MCF 10A (cell line): ENCODE measurements at regions of chr1 and their contacts with region 1.

Region 1: DNA sequence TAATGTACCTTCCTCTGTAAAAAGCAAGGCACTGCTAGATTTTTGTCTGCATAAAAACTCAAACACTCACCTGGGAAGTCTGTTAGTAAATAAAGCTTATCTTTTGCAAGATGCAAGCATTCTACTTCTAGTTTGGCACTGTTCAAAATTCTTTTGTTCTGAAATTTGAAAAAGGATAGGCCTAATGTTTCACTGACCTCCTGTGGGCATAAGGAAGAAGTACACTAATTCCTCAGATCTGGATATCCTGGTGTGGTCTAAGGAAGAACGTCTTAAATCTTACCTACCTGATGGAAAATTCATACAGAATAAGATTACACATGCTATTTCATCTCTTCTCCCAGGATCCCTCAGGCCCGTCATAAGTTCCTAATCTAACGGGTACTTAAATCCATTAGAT is 93.5 kb upstream of the CAMK1G start:
- DNase-seq: peak; percentile 69
- H3K4me3 Mint-ChIP-seq: no peak overlapping the region
- H3K27ac Mint-ChIP-seq: no peak overlapping the region
- H3K4me1 Mint-ChIP-seq: peaks cover 26% of the 10 kb centered on the region
- H3K27me3 Mint-ChIP-seq: no peaks in the 10 kb centered on the region
- CTCF ChIP-seq: peak; percentile 90

Region 2: DNA sequence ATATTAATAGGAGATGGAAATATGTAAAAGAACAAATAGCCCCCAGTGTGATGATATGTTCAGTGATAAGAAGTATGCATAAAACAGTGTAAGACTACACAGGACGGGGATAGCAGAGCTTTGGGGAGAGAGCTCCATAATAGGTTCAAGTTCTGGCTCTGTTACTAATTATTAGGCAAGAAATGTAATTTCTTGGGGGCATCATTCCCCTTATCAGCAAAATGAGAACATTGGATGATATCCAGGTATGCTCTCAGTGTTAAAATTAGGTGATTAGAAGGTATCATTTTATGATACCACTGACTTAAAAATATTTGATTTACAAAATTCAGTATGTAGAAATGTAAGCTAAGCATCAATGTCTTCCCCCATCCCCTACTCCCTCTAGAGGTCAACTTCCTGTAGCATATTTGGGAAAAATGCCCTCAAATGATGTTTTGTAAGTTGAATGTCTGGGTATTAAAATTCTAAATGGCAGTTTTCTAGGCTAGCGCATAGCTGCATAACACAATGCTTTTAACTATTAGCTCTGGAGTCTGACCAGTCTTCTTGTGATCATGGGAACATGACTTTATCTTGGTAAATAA is 492.2 kb before region 1 on chr1:
- CTCF ChIA-PET with region 1: interaction called, 3 read pairs
- POLR2A ChIA-PET with region 1: no interaction called
- intact Hi-C with region 1: loop called (anchors 5 kb)
- DNase-seq: peak; percentile 70
- H3K4me3 Mint-ChIP-seq: no peak overlapping the region
- H3K27ac Mint-ChIP-seq: no peak overlapping the region
- H3K4me1 Mint-ChIP-seq: no peaks in the 10 kb centered on the region
- H3K27me3 Mint-ChIP-seq: no peaks in the 10 kb centered on the region
- CTCF ChIP-seq: peak; percentile 82

Region 3: DNA sequence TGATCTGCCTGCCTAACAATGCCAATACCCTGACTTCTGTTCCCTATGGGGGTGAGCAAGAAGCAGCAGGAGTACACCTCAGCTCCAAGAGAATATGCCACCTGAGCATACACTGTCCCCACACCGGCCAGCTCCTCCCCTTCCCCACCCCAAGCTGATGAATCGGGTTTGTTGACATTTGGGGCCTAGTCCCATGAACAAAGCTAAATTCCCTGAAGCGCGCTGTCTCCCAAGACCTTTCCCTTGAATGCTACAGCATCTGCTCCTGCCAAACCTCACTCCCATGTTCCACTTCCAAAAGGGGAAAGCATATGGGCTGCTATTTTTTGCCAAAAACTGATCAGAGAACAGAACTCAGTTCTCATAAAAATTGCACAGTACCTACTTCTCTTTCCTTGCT is 126.9 kb before region 1 on chr1:
- CTCF ChIA-PET with region 1: interaction called, 10 read pairs
- POLR2A ChIA-PET with region 1: interaction called, 7 read pairs
- intact Hi-C with region 1: no loop called
- DNase-seq: no peak
- H3K4me3 Mint-ChIP-seq: no peak overlapping the region
- H3K27ac Mint-ChIP-seq: peak overlapping the region; percentile 88
- H3K4me1 Mint-ChIP-seq: peaks cover 60% of the 10 kb centered on the region
- H3K27me3 Mint-ChIP-seq: no peaks in the 10 kb centered on the region
- CTCF ChIP-seq: no peak

Region 4: DNA sequence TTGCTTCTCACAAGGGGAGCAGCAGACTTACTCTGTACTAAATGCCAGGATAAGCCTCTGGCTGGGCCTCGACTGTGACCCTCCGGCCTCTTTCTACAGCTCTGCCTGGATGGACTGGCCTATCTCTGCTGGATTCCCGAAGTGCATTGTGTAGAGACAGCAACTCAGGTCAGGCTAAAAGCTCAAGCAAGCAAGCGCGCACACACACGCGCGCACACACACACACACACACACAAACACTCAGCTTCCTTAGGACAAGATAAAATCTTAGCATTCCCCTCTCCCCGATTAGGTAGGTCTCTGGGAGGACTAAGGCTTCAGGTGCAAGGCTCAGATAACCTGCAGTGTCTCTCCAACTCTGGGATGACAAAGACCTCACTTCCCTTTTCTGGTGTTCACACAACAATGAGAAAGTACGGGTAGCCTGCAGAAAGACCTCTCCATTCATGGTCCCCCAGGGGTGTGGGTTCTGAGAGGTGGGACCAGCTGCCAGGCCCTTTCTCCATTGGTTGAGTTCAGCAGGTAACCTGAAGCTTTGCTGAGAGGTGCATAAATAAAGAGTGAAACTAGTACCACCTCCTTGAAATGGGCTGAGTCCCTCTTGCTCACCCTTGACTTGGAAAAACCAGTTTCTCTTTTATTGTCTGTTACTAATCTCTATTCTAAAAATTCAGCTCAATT is 61.6 kb before region 1 on chr1:
- CTCF ChIA-PET with region 1: interaction called, 54 read pairs
- POLR2A ChIA-PET with region 1: interaction called, 391 read pairs
- intact Hi-C with region 1: no loop called
- DNase-seq: peak; percentile 99
- H3K4me3 Mint-ChIP-seq: peak overlapping the region; percentile 93
- H3K27ac Mint-ChIP-seq: peak overlapping the region; percentile 90
- H3K4me1 Mint-ChIP-seq: peaks cover 60% of the 10 kb centered on the region
- H3K27me3 Mint-ChIP-seq: no peaks in the 10 kb centered on the region
- CTCF ChIP-seq: no peak

Region 5: GRCh38 chr1:209455145-209455544 is 34.9 kb before region 1 on chr1:
- CTCF ChIA-PET with region 1: interaction called, 169 read pairs
- POLR2A ChIA-PET with region 1: interaction called, 28 read pairs
- intact Hi-C with region 1: loop called (anchors 1 kb)
- DNase-seq: peak; percentile 44
- H3K4me3 Mint-ChIP-seq: no peak overlapping the region
- H3K27ac Mint-ChIP-seq: no peak overlapping the region
- H3K4me1 Mint-ChIP-seq: peaks cover 32% of the 10 kb centered on the region
- H3K27me3 Mint-ChIP-seq: peaks cover 25% of the 10 kb centered on the region
- CTCF ChIP-seq: no peak

Region 6: GRCh38 chr1:209505044-209505443 is 15.0 kb after region 1 on chr1:
- CTCF ChIA-PET with region 1: interaction called, 206 read pairs
- POLR2A ChIA-PET with region 1: interaction called, 9 read pairs
- intact Hi-C with region 1: no loop called
- DNase-seq: no peak
- H3K4me3 Mint-ChIP-seq: no peak overlapping the region
- H3K27ac Mint-ChIP-seq: no peak overlapping the region
- H3K4me1 Mint-ChIP-seq: no peaks in the 10 kb centered on the region
- H3K27me3 Mint-ChIP-seq: no peaks in the 10 kb centered on the region
- CTCF ChIP-seq: no peak

Region 7: DNA sequence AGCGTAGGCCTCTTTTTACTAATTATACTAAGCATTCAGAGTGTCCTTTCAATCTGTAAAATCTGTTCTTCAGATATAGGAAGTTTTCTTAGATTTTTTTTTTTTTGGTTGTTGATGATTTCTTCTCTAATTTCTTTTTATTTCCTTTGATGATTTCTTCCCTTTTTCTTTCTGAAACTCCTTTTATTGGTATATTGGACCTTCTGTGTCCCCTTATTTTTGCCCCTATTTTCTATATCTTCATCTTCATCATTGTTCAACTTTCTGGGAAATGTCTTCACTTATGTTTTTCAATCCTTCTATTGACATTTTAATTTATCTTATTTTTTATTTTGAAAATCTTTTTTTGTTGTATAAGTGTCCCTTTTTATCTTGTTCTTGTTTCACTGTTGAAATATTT is 430.8 kb after region 1 on chr1:
- CTCF ChIA-PET with region 1: no interaction called
- POLR2A ChIA-PET with region 1: no interaction called
- intact Hi-C with region 1: no loop called
- DNase-seq: no peak
- H3K4me3 Mint-ChIP-seq: no peak overlapping the region
- H3K27ac Mint-ChIP-seq: no peak overlapping the region
- H3K4me1 Mint-ChIP-seq: peaks cover 6% of the 10 kb centered on the region
- H3K27me3 Mint-ChIP-seq: no peaks in the 10 kb centered on the region
- CTCF ChIP-seq: no peak